Activated naive CD4-positive, alpha-beta T cell treated with anti-CD3 and anti-CD28 coated beads, Interleukin-2, amount 10 ng/mL, durations not matched to agents 7 days and 5 days (primary cell): ENCODE measurements at regions of chr14 and their contacts with region 1.

Region 1: GRCh38 chr14:65824285-65824977 is 411.9 kb downstream of the FUT8 start:
- DNase-seq: peak; percentile 71
- H3K4me3 Mint-ChIP-seq: no peak overlapping the region
- H3K27ac Mint-ChIP-seq: no peak overlapping the region
- H3K4me1 Mint-ChIP-seq: peaks cover 48% of the 10 kb centered on the region
- H3K27me3 Mint-ChIP-seq: peaks cover 9% of the 10 kb centered on the region

Region 2: DNA sequence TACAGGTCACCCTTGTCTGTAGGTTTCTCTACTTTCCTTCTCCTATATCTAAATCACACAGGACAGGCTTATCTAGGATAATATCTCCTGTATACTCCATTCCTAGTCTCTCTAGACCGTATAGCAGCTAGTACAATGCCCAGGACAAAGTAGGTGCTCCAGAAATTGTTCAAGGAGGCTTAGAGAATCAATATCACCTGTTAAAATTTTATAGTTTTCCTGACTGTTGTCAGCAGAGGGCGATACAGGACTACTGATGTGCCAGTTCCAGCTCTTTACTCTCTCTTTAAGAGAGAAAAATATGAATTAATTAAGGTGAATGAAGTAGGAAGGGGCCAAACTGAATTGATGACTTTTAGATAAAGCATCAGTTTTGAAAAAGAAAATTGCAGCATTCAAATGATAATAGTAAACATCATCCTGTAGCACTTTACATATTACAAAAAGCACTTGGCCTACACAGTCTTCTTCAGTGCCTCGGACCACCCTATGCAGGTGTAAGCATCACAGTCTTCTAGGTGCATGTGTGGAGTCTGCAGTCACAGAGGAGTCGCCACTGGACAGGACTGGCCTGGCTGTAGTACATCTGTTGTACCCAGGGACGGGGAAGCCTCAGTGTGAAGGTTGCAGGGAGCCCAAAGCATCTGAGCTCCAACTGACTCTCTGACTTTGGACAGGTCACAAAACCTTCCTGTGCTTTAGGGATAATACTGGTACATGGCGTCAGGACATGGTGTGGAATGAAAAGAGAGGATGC is 660.2 kb before region 1 on chr14:
- CTCF ChIA-PET with region 1: interaction called, 47 read pairs
- DNase-seq: peak; percentile 56
- H3K4me3 Mint-ChIP-seq: no peak overlapping the region
- H3K27ac Mint-ChIP-seq: no peak overlapping the region
- H3K4me1 Mint-ChIP-seq: peaks cover 15% of the 10 kb centered on the region
- H3K27me3 Mint-ChIP-seq: peaks cover 6% of the 10 kb centered on the region

Region 3: GRCh38 chr14:65810322-65810721 is 14.1 kb before region 1 on chr14:
- CTCF ChIA-PET with region 1: interaction called, 13 read pairs
- DNase-seq: no peak
- H3K4me3 Mint-ChIP-seq: no peak overlapping the region
- H3K27ac Mint-ChIP-seq: no peak overlapping the region
- H3K4me1 Mint-ChIP-seq: peaks cover 4% of the 10 kb centered on the region
- H3K27me3 Mint-ChIP-seq: peaks cover 5% of the 10 kb centered on the region

Region 4: DNA sequence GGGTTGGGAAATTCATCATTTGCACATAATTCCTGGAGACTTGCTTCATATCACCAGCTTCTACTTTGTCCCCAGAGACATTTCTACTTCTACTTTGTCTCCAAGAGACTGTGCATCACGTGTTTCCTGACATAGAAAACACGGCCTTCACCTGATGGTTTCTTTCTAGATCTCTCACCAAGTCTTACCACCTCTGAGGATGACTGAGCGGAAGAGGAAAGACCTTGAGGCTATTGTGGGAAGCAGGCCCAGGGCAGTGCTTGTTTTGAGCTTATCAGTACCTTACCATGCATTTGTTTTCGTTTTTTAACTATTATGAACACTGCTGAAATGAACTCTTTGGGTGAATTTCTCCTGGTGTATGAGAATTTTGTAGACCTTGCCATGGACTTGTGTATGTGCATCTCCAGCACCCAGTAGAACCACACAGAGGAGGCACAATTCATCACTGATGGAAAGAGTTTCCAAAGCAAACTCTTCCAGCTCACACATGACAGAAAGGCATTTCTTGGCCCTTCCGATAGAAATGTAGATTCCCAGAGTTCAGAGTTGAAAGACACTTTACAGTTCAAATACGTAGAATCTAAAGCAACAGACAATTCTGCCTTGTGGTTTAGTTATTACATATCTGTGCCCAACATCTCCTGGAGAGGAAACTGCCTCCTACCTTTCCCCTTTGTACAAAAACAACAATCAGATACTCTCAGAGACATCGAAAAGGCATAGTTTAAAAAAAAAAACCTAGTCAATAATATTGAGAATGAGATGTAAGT is 22.8 kb after region 1 on chr14:
- CTCF ChIA-PET with region 1: interaction called, 17 read pairs
- DNase-seq: peak; percentile 89
- H3K4me3 Mint-ChIP-seq: peak overlapping the region; percentile 41
- H3K27ac Mint-ChIP-seq: peak overlapping the region; percentile 95
- H3K4me1 Mint-ChIP-seq: peaks cover 84% of the 10 kb centered on the region
- H3K27me3 Mint-ChIP-seq: no peaks in the 10 kb centered on the region

Region 5: GRCh38 chr14:66070509-66071319 is 246.3 kb after region 1 on chr14:
- CTCF ChIA-PET with region 1: interaction called, 10 read pairs
- DNase-seq: peak; percentile 81
- H3K4me3 Mint-ChIP-seq: no peak overlapping the region
- H3K27ac Mint-ChIP-seq: no peak overlapping the region
- H3K4me1 Mint-ChIP-seq: peaks cover 16% of the 10 kb centered on the region
- H3K27me3 Mint-ChIP-seq: peaks cover 17% of the 10 kb centered on the region